ENCODE measurements at regions of chr1 and their contacts with region 1.

Region 1: GRCh38 chr1:7783826-7784491 is at the start of gene PER3:
- DNase-seq: peak; percentile 94 to 100 (median 98)

Region 2: DNA sequence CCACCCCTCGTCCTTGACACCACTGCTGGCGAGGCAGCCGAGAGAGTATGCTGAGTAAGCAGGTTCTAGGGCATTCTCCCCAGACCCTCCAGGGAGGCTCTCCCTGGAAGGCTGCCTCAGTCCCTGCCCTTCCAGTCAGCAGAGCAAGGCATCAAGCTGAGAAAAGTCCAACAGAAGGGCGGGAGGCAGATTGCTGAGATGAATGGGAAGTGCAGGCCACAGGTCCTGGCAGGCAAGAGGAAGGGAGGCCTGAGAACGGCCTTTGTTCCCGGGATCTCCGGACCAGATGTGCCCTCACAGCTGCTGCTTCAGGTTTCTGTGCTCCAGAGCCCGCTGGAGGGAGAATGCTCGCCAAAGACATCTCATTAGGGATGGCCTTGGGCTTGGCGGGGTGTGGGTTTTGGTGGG is 282.9 kb before region 1 on chr1:
- intact Hi-C with region 1: no loop called
- DNase-seq: peak in 5 of 10 donors; percentile 11 to 87 (median 44)

Region 3: GRCh38 chr1:7586021-7586941 is 197.7 kb before region 1 on chr1:
- intact Hi-C with region 1: no loop called
- DNase-seq: peak in 2 of 10 donors; percentile 71 to 72

Region 4: DNA sequence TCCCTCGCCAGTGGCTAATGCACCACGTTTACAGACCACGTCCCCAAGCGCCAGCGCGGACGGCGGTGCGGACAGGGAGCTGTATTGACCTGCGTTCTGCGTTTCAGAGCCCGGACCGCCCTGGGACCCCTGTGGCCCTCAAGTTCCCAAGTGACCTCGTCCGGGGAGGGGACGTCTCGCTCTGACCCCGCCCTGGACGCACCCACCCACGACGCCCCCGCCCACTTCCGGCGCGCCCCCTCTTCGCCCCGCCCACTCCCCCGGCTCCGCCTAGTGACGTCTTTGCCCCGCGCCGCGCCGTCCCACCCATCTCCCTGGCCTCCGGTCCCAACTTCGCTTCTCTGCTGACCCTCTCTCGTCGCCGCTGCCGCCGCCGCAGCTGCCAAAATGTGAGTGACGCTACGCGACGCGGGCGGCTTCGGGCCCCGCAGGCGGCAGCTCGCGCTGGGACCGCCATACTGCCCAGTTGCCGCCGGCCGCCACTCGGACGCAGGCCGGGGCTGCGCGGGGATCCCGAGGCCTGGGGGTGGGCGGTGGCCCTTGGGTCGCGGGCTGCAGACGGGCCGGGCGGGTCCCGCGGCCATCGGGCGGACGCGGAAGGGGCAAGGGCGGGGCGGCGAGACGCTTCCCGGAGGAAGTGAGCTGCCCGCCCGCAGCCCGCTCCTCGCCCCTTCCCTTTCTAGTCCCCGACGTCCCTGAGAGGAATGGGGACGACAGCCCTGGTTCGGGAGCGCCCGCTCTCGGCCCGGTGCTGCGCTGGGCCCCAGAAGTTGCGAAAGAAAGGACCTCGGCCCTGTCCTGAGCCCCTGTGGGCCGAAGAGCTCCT is 12.7 kb before region 1 on chr1 and contains the start of gene VAMP3:
- intact Hi-C with region 1: loop called (anchors 1 kb)
- DNase-seq: peak; percentile 75 to 98 (median 90)

Region 5: DNA sequence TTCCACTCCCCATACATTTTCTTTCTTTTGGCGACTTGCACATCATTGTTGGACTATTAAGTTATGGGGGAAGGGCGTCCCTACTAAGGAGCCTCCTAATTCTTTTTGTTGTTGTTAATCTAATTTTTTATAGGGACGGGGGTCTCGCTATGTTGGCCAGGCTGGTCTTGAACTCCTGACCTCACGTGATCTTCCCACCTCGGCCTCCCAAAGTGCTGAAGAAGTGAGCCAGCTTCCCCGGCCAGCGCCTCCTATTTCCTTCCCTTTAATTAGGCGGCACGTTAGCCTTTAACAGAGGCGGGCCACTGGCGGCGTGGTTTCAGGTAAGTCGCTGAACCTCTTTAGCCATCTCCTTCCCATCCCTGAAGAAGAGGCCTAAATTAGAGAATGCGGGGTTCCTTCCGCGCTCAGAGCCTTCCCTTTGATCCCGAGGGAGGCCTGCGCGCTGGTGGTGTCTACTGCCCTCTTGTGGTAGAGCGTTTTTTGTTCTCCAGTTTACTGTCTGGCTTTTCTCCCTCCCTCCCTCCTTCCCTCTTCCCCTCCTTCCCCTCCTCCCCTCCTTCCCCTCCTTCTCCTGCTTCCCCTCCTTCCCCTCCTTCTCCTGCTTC is 118.6 kb after region 1 on chr1:
- intact Hi-C with region 1: loop called (anchors 10 kb)
- DNase-seq: peak; percentile 23 to 93 (median 66)

Region 6: DNA sequence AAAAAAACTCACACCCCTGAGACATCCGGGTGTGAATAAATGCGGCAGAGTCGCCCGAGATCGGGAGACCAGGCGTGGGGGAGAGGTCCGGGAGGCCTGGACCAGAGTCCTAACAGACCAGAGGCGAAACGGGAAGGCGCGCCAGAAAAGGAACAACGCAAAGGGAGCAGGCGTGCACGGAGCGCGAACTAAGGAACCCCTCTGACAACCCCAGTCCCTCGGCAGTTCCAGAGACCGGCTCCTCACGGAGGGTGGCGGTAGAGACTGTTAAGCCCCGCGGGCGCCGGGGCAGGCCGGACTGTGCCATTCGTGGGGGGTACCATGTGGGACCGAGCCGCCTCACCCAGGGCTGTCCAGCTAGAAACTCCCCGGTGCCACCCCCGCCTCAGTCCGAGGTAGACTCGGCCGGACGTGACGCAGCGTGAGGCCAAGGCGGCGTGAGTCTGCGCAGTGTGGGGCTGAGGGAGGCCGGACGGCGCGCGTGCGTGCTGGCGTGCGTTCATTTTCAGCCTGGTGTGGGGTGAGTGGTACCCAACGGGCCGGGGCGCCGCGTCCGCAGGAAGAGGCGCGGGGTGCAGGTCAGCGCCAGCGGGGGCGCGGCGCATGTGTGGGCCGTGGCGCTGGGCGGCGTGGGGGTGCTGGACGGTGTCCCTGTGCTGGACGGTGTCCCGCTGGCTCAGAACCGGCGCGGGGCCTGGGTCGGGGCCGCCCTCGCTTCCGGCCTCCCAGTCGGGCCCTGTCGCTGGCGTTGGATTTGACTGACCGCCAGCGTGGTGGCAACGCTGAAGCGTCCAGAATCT is 177.5 kb after region 1 on chr1 and contains the start of gene PARK7:
- intact Hi-C with region 1: loop called (anchors 10 kb)
- DNase-seq: peak; percentile 99 to 100 (median 100)

Measured in posterior cingulate gyrus (tissue), 11 donors.